ENCODE measurements at regions of chr10 and their contacts with region 1.

Region 1: DNA sequence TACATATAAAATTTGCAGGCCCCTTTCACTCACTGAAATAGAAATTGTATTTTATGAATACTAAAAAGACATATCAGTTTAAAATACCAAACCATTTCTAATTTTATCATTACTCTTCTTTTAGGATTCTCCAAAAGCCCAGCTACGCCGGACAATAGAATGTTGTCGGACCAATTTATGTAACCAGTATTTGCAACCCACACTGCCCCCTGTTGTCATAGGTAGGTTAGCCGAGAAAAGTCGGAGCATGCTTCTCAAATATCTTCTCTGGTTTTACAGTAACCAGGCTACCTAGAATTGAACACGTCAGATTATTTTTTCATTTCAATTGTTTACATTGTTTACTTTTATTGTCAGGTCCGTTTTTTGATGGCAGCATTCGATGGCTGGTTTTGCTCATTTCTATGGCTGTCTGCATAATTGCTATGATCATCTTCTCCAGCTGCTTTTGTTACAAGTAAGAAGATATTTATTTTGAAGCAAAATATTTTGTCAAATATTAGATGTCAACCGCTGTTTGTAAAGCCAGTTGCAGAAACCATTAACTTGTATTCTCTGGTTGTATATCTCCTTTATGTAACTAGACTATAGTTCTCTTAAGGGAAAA is 57.6 kb downstream of the MMRN2 start:
- DNase-seq: peak; percentile 60
- ATAC-seq: peak; percentile 77
- H3K4me3 ChIP-seq: no peak overlapping the region
- H3K27ac ChIP-seq: no peak overlapping the region
- H3K4me1 ChIP-seq: no peaks in the 10 kb centered on the region
- H3K27me3 ChIP-seq: no peaks in the 10 kb centered on the region
- CTCF ChIP-seq: peak; percentile 75
- EP300 ChIP-seq: no peak
- POLR2A ChIP-seq: no peak
- RAD21 ChIP-seq: peak; percentile 53

Region 2: GRCh38 chr10:86225103-86225782 is 674.5 kb before region 1 on chr10:
- CTCF ChIA-PET with region 1: no interaction called
- POLR2A ChIA-PET with region 1: no interaction called
- in situ Hi-C with region 1: no loop called
- intact Hi-C with region 1: no loop called
- DNase-seq: no peak
- ATAC-seq: no peak
- H3K4me3 ChIP-seq: no peak overlapping the region
- H3K27ac ChIP-seq: no peak overlapping the region
- H3K4me1 ChIP-seq: no peaks in the 10 kb centered on the region
- H3K27me3 ChIP-seq: peaks cover 0 to 4% of the 10 kb centered on the region in 2 experiments; a peak in 3 of 5 replicates
- CTCF ChIP-seq: no peak
- EP300 ChIP-seq: no peak
- POLR2A ChIP-seq: no peak
- RAD21 ChIP-seq: no peak

Region 3: GRCh38 chr10:86688398-86688921 is 211.3 kb before region 1 on chr10:
- CTCF ChIA-PET with region 1: interaction called, 31 read pairs
- POLR2A ChIA-PET with region 1: no interaction called
- in situ Hi-C with region 1: no loop called
- intact Hi-C with region 1: loop called (anchors 2 kb)
- DNase-seq: peak; percentile 48
- ATAC-seq: peak; percentile 67
- H3K4me3 ChIP-seq: no peak overlapping the region
- H3K27ac ChIP-seq: no peak overlapping the region
- H3K4me1 ChIP-seq: no peaks in the 10 kb centered on the region
- H3K27me3 ChIP-seq: peaks cover 9 to 51% of the 10 kb centered on the region in 2 experiments; a peak in 4 of 5 replicates
- CTCF ChIP-seq: peak; percentile 85
- EP300 ChIP-seq: no peak
- POLR2A ChIP-seq: no peak
- RAD21 ChIP-seq: peak; percentile 56

Region 4: GRCh38 chr10:86693721-86694369 is 205.9 kb before region 1 on chr10:
- CTCF ChIA-PET with region 1: interaction called, 31 read pairs
- POLR2A ChIA-PET with region 1: no interaction called
- in situ Hi-C with region 1: loop called (anchors 5 kb)
- intact Hi-C with region 1: loop called (anchors 2 kb)
- DNase-seq: peak; percentile 19
- ATAC-seq: peak; percentile 67
- H3K4me3 ChIP-seq: no peak overlapping the region
- H3K27ac ChIP-seq: no peak overlapping the region
- H3K4me1 ChIP-seq: no peaks in the 10 kb centered on the region
- H3K27me3 ChIP-seq: peaks cover 8 to 54% of the 10 kb centered on the region in 2 experiments; a peak in 4 of 5 replicates
- CTCF ChIP-seq: peak; percentile 55
- EP300 ChIP-seq: no peak
- POLR2A ChIP-seq: no peak
- RAD21 ChIP-seq: peak; percentile 50; the same call in 1 of the 2 replicates

Region 5: GRCh38 chr10:86710987-86711512 is 188.7 kb before region 1 on chr10:
- CTCF ChIA-PET with region 1: interaction called, 17 read pairs
- POLR2A ChIA-PET with region 1: no interaction called
- in situ Hi-C with region 1: no loop called
- intact Hi-C with region 1: loop called (anchors 1 kb)
- DNase-seq: peak; percentile 62
- ATAC-seq: peak; percentile 88
- H3K4me3 ChIP-seq: peak overlapping the region; percentile 65 to 80 (median 78); a peak in 5 of 6 replicates
- H3K27ac ChIP-seq: peak overlapping the region; percentile 49
- H3K4me1 ChIP-seq: peaks cover 14% of the 10 kb centered on the region; the same call in 1 of the 2 replicates
- H3K27me3 ChIP-seq: peaks cover 3 to 21% of the 10 kb centered on the region in 2 experiments; a peak in 3 of 5 replicates
- CTCF ChIP-seq: peak; percentile 86
- EP300 ChIP-seq: no peak
- POLR2A ChIP-seq: peak; percentile 20 to 31; a peak in 1 of 4 replicates
- RAD21 ChIP-seq: peak; percentile 97

Region 6: DNA sequence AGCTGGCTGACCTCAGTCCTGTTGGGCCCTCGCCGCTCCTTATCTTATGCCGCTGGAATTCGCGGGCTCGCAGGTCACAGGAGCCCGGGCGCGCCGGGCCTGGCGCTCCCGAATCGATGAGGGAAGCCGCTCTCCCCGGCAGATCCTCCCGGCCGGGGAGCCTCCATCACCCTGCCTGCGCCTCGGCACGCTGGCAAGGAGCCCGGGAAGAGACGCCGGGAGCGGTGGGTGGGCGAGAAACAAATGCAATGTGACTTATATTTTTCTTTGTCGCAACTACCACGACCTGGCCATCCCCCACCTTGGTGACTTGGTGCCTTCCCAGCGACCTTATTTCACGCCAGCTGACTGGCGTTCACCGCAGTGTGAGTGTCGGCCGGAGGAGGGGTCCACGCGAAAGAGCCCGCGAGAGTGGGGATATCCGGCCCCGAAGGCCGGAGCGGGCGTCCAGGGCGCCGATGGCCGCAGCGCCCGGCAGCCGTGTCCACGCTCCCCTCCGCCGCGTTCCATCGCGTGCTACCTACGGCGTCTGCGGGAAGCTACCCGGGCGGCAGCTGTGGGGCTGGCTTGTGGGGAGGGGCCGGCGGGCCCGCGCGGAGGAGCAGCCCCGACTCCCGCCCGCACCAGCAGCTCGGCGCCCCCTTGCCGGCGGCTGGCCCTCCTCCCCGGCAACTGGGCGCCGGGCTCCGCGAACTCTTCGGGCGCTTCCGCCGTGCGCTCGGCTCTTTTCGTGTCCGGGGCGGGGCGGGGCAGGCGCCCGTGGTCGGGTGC is 143.8 kb before region 1 on chr10:
- CTCF ChIA-PET with region 1: no interaction called
- POLR2A ChIA-PET with region 1: interaction called, 4 read pairs
- in situ Hi-C with region 1: no loop called
- intact Hi-C with region 1: loop called (anchors 5 kb)
- DNase-seq: peak; percentile 83
- ATAC-seq: peak; percentile 86
- H3K4me3 ChIP-seq: peak overlapping the region; percentile 64 to 97 (median 83)
- H3K27ac ChIP-seq: peak overlapping the region; percentile 98
- H3K4me1 ChIP-seq: peaks cover 49% of the 10 kb centered on the region
- H3K27me3 ChIP-seq: no peaks in the 10 kb centered on the region; a peak in 1 of 5 replicates
- CTCF ChIP-seq: peak; percentile 8; the same call in 1 of the 2 replicates
- EP300 ChIP-seq: peak in 1 of 2 experiments; percentile 19; a peak in 1 of 4 replicates
- POLR2A ChIP-seq: peak; percentile 74 to 84
- RAD21 ChIP-seq: peak; percentile 58

Region 7: DNA sequence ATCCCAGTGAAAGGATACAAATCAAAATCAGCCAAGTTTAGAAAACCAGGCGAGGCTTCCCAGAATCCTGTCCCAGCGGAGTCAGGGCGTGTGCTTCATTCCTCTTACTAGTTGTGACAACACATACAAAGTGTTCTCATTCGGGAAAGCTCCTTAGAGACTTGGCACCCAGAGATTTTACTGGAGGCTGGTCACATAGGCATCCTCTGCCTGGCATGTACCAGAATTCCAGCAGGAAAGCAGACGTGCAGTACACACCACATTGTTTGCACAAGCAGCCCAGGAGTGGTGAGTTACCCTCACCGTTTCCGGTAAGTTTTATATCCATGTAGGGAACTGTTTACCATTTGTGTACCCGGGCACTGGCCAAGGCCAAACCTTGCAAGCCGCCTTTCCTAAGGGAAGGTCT is 22.8 kb after region 1 on chr10:
- CTCF ChIA-PET with region 1: no interaction called
- POLR2A ChIA-PET with region 1: no interaction called
- in situ Hi-C with region 1: no loop called
- intact Hi-C with region 1: no loop called
- DNase-seq: peak; percentile 20
- ATAC-seq: peak; percentile 48; the same call in 1 of the 3 replicates
- H3K4me3 ChIP-seq: no peak overlapping the region
- H3K27ac ChIP-seq: no peak overlapping the region
- H3K4me1 ChIP-seq: no peaks in the 10 kb centered on the region
- H3K27me3 ChIP-seq: no peaks in the 10 kb centered on the region
- CTCF ChIP-seq: no peak
- EP300 ChIP-seq: no peak
- POLR2A ChIP-seq: no peak
- RAD21 ChIP-seq: no peak

Region 8: DNA sequence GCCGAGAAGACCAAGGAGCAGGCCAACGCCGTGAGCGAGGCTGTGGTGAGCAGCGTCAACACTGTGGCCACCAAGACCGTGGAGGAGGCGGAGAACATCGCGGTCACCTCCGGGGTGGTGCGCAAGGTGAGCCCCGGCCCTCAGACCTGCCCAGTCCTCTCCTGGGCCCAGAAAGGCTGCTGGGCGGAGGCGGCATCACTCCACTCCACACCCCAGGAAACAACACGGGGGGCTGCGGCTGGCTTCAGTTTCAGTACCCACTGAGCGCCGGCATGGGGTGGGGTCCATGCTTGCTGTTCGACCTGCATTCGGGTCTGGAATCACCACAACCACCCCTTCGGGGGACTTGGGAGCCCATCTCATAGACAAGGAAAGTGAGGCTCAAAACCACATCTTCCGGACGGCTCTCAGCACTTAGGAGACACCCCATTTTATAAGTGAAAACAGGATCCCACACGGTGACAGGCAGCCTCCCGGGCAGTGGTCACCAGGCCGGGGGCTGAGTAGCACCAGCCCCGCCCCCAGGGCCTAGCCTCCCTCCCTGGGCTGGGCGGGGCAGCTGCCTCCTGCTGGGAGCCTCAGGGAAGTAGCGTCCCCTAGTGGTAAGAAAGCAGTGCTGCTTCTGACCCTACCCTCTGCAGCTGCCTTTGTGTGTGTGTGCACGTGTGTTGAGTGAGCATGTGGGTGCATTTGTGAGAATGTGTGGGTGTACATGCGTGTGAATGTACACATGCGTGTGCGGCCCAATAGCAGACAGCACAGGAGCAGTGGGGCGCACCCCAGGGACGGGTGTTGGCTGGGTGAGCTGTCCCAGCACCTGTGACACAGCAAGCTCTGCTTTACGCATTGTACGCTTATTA is 60.5 kb after region 1 on chr10:
- CTCF ChIA-PET with region 1: no interaction called
- POLR2A ChIA-PET with region 1: no interaction called
- in situ Hi-C with region 1: no loop called
- intact Hi-C with region 1: no loop called
- DNase-seq: peak; percentile 68
- ATAC-seq: peak; percentile 72
- H3K4me3 ChIP-seq: peak overlapping the region; percentile 12 to 66 (median 15); a peak in 5 of 6 replicates
- H3K27ac ChIP-seq: no peak overlapping the region
- H3K4me1 ChIP-seq: peaks cover 44% of the 10 kb centered on the region
- H3K27me3 ChIP-seq: peaks cover 11 to 75% of the 10 kb centered on the region in 2 experiments
- CTCF ChIP-seq: peak; percentile 97
- EP300 ChIP-seq: no peak
- POLR2A ChIP-seq: no peak
- RAD21 ChIP-seq: peak; percentile 80

Measured in HepG2 (cell line).